Panc1 (cell line): ENCODE measurements at regions of chr11 and their contacts with region 1.

Region 1: DNA sequence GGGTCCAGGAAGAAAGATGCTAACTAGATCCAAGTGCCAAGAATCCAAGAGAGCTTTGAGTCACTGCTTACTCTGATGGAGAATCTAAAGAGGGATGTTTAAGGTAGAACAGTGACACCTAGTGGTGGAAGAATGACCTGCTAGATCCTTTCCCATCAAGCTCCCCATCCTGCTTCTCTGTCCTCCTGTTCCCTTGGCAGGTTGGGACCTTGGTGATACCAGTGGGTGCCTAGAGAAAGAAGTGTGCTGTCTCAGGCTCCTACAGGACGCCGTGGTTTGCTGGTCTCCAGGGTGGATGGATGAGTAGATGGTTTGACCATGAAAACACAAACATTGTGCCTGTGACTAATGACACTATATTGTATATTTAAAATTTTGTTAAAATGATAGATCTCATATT is 383.7 kb downstream of the TMEM135 start:
- DNase-seq: peak; percentile 80
- ATAC-seq: peak; percentile 91
- H3K4me3 ChIP-seq: no peak overlapping the region
- H3K27ac ChIP-seq: no peak overlapping the region
- H3K4me1 ChIP-seq: no peaks in the 10 kb centered on the region
- H3K27me3 ChIP-seq: peaks cover 17% of the 10 kb centered on the region
- CTCF ChIP-seq: peak; percentile 88

Region 2: GRCh38 chr11:87352759-87353707 is 68.4 kb before region 1 on chr11:
- CTCF ChIA-PET with region 1: interaction called, 9 read pairs
- POLR2A ChIA-PET with region 1: no interaction called
- in situ Hi-C with region 1: no loop called
- intact Hi-C with region 1: loop called (anchors 1 kb)
- DNase-seq: peak; percentile 67
- ATAC-seq: peak; percentile 99
- H3K4me3 ChIP-seq: no peak overlapping the region
- H3K27ac ChIP-seq: no peak overlapping the region
- H3K4me1 ChIP-seq: no peaks in the 10 kb centered on the region
- H3K27me3 ChIP-seq: peaks cover 3% of the 10 kb centered on the region
- CTCF ChIP-seq: peak; percentile 100

Region 3: DNA sequence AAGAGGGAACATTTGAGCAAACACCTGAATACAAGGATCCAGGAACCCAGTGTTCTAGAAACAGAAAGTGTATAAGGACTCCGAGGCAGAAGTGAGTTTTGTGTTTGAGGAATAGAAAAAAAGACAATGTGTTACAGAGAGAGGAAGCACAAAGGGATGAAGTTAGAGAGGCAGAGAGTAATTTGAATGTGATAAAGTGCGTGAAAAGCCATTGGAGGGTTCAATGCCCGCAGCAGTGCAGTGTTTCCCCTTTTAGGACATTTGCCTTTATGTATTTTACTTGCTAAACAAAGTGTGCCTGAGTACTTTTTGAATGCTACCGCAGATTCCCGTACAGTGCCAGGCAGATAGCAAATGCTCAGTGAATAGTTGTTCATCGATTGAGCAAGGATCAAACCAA is 245.3 kb after region 1 on chr11:
- CTCF ChIA-PET with region 1: no interaction called
- POLR2A ChIA-PET with region 1: no interaction called
- in situ Hi-C with region 1: no loop called
- intact Hi-C with region 1: no loop called
- DNase-seq: no peak
- ATAC-seq: no peak
- H3K4me3 ChIP-seq: no peak overlapping the region
- H3K27ac ChIP-seq: no peak overlapping the region
- H3K4me1 ChIP-seq: no peaks in the 10 kb centered on the region
- H3K27me3 ChIP-seq: no peaks in the 10 kb centered on the region
- CTCF ChIP-seq: no peak